ENCODE measurements at regions of chr9 and their contacts with region 1.

Region 1: GRCh38 chr9:80074439-80074838 is 502.7 kb downstream of the TLE4 start:
- DNase-seq: no peak
- ATAC-seq: no peak
- H3K4me3 ChIP-seq: no peak overlapping the region
- H3K4me1 ChIP-seq: no peaks in the 10 kb centered on the region
- CTCF ChIP-seq: no peak

Region 2: DNA sequence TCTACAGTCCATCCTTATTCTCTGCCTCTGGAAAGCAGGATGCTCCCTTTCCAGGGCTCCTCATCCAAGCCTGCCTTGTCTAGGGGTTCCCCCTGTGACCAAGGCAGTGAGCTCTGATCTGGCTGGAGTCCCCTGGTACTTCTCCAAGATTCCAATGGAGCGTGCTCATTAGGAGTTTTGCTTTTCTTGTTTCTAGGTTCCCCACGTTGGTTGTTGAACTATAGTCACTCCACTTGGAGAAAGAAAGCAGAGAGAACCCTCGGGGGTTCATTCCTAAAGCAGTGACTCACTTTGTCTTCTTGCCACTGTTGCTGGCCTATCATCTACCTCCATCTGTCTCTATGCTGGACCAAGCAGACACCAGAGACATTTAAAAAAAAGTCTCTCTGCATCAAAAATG is 310.1 kb before region 1 on chr9:
- intact Hi-C with region 1: loop called in 1 of 2 experiments (anchors 10 kb)
- DNase-seq: peak in 2 of 3 donors; percentile 29 to 33
- ATAC-seq: peak; percentile 59
- H3K4me3 ChIP-seq: no peak overlapping the region
- H3K4me1 ChIP-seq: no peaks in the 10 kb centered on the region
- CTCF ChIP-seq: no peak

Region 3: DNA sequence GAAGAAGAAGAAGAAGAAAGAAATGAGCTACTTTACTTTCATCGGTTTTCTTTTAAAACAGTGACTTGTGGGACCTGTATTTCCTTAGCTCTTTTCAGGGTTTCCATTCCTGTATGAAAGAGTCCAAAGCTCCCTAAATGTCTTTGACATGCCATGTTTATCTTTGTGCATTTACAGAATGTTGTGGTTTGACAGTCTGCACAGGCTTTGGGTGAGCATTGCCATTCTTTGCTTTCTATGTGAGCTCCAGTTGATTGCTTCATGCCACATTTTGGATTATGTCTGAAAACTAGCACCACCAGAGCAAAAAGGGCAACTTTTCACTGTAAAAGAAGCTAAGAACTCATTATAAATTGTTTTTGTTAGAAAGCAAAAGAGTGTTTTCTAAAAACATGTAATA is 230.7 kb after region 1 on chr9:
- intact Hi-C with region 1: no loop called
- DNase-seq: no peak
- ATAC-seq: no peak
- H3K4me3 ChIP-seq: no peak overlapping the region
- H3K4me1 ChIP-seq: no peaks in the 10 kb centered on the region
- CTCF ChIP-seq: no peak

Measured in mucosa of descending colon (tissue), 3 donors.